Mammary epithelial cell (primary cell): ENCODE measurements at regions of chr15 and their contacts with region 1.

Region 1: GRCh38 chr15:90101969-90102890 is at the start of gene IDH2:
- DNase-seq: peak; percentile 78
- H3K4me3 ChIP-seq: peak within 1 kb of the TSS; percentile 48 to 71 (median 66)
- H3K27ac ChIP-seq: peak within 1 kb of the TSS; percentile 24
- H3K4me1 ChIP-seq: peaks cover 39% of the 10 kb centered on the region
- H3K27me3 ChIP-seq: no peaks in the 10 kb centered on the region
- CTCF ChIP-seq: no peak
- total RNA-seq, gene IDH2: 16.4 to 39.5 TPM

Region 2: DNA sequence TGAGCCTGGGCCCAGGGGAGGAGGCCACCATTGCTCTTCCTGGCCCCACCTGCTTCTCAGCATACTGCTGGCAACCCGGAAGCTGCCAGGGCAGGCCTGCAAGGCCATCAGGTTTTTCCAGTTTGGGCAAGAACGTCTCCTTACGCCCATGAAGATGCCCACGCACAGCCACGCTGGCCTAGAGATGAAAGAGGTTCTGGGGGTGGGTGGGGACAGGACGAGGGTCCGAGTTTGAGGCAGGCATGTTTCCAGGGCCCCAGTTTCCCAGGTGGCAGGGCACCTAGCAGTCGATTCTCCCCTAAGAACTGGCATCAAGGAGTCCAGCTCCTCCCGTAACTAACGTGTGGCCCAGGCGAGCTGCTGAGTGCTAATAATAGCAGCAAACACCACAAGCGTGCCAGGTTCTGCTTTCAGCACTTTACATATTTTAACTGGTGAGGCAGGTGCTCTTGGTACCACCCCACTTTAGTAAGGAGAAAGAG is 55.3 kb before region 1 on chr15:
- CTCF ChIA-PET with region 1: no interaction called
- dilution Hi-C with region 1: loop called (anchors 5 kb)
- in situ Hi-C with region 1: no loop called
- intact Hi-C with region 1: no loop called
- DNase-seq: peak; percentile 63
- H3K4me3 ChIP-seq: no peak overlapping the region
- H3K27ac ChIP-seq: no peak overlapping the region
- H3K4me1 ChIP-seq: peaks cover 15% of the 10 kb centered on the region
- H3K27me3 ChIP-seq: no peaks in the 10 kb centered on the region
- CTCF ChIP-seq: no peak

Region 3: DNA sequence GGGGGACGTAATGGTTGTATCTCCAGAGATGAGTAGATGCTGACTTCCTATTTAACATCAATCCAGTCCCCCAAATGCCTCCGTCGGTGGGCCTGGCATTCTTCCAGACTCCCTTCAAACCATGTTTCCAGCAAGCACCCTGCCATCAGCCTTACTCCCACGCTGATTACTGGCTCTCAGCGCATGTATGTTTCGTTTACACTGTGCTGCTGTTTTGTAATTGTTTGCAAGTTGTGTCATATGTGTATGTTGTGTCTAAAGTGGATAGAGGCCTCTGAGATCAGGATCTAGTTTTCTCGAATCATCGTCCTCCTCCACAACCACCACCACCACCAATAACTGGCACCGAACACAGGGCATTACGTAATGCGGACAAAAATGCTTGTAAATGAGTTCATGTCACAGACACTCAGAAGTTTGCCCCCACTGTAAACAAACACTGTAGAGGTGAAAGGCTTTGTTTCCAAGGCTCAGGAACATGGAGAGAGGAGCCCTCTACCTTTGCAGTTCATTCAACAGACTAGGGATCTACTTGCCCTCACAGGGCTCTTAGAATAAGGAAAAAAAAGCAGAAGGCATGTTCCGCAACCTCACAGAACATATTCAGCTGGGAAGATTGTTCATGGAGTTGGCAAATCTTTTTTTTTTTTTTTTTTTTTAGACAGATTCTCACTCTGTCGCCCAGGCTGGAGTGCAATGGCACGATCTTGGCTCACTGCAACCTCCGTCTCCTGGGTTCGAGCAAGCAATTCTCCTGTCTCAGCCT is 52.8 kb after region 1 on chr15:
- CTCF ChIA-PET with region 1: no interaction called
- dilution Hi-C with region 1: loop called (anchors 5 kb)
- in situ Hi-C with region 1: no loop called
- intact Hi-C with region 1: no loop called
- DNase-seq: peak; percentile 44
- H3K4me3 ChIP-seq: no peak overlapping the region
- H3K27ac ChIP-seq: no peak overlapping the region
- H3K4me1 ChIP-seq: peaks cover 14% of the 10 kb centered on the region
- H3K27me3 ChIP-seq: no peaks in the 10 kb centered on the region
- CTCF ChIP-seq: no peak

Region 4: GRCh38 chr15:90214553-90215196 is 112.4 kb after region 1 on chr15:
- CTCF ChIA-PET with region 1: no interaction called
- dilution Hi-C with region 1: loop called (anchors 5 kb)
- in situ Hi-C with region 1: no loop called
- intact Hi-C with region 1: loop called (anchors 5 kb)
- DNase-seq: no peak
- H3K4me3 ChIP-seq: no peak overlapping the region
- H3K27ac ChIP-seq: no peak overlapping the region
- H3K4me1 ChIP-seq: peaks cover 57% of the 10 kb centered on the region
- H3K27me3 ChIP-seq: no peaks in the 10 kb centered on the region
- CTCF ChIP-seq: peak; percentile 31 to 46